IMR-90 (cell line): ENCODE measurements at regions of chr4 and their contacts with region 1.

Region 1: DNA sequence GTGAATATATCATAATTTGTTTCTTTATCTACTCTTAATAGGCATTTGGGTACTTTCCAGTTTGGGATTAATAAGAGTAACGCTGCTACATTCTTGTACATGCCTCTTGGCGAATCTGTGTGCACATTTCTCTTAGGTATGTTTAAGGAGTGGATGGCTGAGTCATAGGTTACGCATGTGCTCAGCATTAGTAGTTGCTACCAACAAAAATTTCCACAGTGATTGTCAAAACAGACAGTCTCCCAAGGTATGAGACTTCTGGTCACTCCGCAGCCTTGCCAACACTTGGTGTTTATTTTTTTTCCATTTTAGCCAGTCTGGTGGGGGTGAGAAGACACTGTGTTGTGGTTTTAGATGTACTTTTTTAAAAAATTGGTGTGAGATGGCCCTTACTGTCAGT is 44.6 kb downstream of the FGFBP1 start:
- DNase-seq: peak; percentile 98
- ATAC-seq: peak; percentile 93
- H3K4me3 ChIP-seq: no peak overlapping the region
- H3K27ac ChIP-seq: no peak overlapping the region
- H3K4me1 ChIP-seq: peaks cover 5% of the 10 kb centered on the region; the same call in 1 of the 2 replicates
- H3K27me3 ChIP-seq: peaks cover 46% of the 10 kb centered on the region
- CTCF ChIP-seq: no peak
- POLR2A ChIP-seq: no peak
- RAD21 ChIP-seq: no peak

Region 2: GRCh38 chr4:15913631-15913970 is 19.6 kb after region 1 on chr4:
- CTCF ChIA-PET with region 1: no interaction called
- POLR2A ChIA-PET with region 1: no interaction called
- dilution Hi-C with region 1: no loop called
- in situ Hi-C with region 1: no loop called
- intact Hi-C with region 1: loop called (anchors 2 kb)
- DNase-seq: peak; percentile 97
- ATAC-seq: peak; percentile 94
- H3K4me3 ChIP-seq: no peak overlapping the region
- H3K27ac ChIP-seq: no peak overlapping the region
- H3K4me1 ChIP-seq: peaks cover 7% of the 10 kb centered on the region
- H3K27me3 ChIP-seq: no peaks in the 10 kb centered on the region
- CTCF ChIP-seq: no peak
- POLR2A ChIP-seq: no peak
- RAD21 ChIP-seq: no peak

Region 3: GRCh38 chr4:15920723-15921591 is 27.0 kb after region 1 on chr4:
- CTCF ChIA-PET with region 1: no interaction called
- POLR2A ChIA-PET with region 1: no interaction called
- dilution Hi-C with region 1: no loop called
- in situ Hi-C with region 1: no loop called
- intact Hi-C with region 1: loop called (anchors 2 kb)
- DNase-seq: peak; percentile 99
- ATAC-seq: peak; percentile 93
- H3K4me3 ChIP-seq: no peak overlapping the region
- H3K27ac ChIP-seq: peak overlapping the region; percentile 44
- H3K4me1 ChIP-seq: peaks cover 9% of the 10 kb centered on the region
- H3K27me3 ChIP-seq: no peaks in the 10 kb centered on the region
- CTCF ChIP-seq: no peak
- POLR2A ChIP-seq: no peak
- RAD21 ChIP-seq: no peak